Activated CD4-positive, alpha-beta memory T cell treated with anti-CD3 and anti-CD28 coated beads, Interleukin-2, amount 10 ng/mL, durations not matched to agents 7 days and 5 days (primary cell): ENCODE measurements at regions of chr11 and their contacts with region 1.

Region 1: DNA sequence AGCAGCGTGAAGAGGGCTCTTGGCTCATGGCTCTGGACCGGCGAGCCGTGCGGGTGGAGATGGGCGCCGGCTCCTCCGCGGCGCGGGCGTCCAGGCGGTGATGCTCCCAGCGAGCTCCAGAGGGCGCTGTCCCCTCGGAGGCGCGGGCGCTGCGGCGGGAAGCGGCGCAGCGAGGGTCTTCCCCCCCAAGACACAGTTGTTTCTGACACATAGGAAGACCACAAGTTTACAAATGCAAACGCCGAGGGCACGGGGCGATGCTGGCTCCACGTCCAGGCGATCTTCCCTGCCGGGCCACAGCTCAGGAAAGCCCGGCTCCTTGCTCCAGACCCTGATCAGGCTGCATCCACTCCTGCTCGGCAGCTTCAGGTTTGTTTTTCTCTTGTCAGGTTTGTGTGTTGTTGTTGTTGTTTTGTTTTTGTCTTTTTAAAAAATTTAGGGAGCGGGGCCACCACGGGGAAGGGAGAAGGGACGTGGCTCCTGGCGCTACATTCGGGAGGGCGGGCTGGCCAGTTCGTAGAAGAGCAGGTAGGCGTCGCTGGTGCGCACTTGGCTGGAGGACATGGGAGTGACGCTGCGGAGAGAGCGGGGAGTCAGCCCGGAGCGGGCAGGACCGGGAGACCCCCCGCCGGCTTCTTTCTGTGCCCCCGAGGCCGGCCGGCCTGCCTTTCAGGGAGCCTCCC is 10.0 kb upstream of the MFRP start:
- DNase-seq: peak; percentile 77
- H3K4me3 Mint-ChIP-seq: peak overlapping the region; percentile 87
- H3K27ac Mint-ChIP-seq: no peak overlapping the region
- H3K4me1 Mint-ChIP-seq: peaks cover 16% of the 10 kb centered on the region
- H3K27me3 Mint-ChIP-seq: peaks cover 35% of the 10 kb centered on the region

Region 2: GRCh38 chr11:119329320-119329719 is 27.2 kb before region 1 on chr11:
- CTCF ChIA-PET with region 1: interaction called, 15 read pairs
- POLR2A ChIA-PET with region 1: no interaction called
- DNase-seq: no peak
- H3K4me3 Mint-ChIP-seq: no peak overlapping the region
- H3K27ac Mint-ChIP-seq: no peak overlapping the region
- H3K4me1 Mint-ChIP-seq: peaks cover 16% of the 10 kb centered on the region
- H3K27me3 Mint-ChIP-seq: peaks cover 16% of the 10 kb centered on the region

Region 3: DNA sequence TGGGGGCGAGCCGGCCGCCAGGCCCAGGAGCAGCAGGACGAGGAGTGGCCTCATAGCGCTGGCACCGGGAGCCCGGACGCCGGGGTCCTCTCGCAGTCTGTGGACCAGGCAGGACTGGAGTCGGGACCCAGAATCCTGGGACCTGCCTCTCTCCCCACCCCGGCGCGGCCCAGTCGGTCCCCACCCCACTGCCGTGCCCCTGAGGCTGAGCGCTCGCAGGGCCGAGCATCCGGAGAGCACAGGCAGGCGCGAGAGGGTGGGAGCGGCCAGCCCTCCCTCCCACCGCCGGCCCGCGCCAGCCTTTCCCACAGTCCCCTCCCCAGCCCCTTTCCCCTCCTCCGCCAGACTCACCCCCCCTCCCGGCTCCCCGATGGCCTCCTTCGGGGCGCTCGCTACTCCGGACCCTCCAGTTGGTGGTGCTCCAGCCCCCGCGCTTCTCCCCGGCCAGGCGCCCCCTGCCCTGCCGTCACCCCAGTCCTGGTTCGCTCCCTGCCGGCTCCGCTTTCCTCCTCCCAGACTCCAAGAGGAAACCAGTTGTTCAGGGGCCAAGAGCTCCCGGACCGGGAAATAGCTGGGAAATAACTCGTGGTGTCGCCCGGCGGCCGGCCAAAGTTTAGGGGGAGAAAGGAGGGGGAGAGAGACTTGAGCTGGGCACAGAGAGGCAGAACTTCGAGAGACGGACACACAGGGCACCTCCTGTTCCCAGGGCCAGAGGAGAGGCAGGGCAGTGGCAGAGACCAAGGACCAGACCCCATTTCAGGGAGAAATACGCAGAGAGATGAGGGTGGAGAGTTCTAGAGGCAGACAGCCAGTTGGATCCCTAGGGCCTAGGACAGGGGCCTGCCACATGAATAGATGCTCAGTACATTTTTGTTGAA is 15.9 kb before region 1 on chr11 and contains the start of gene C1QTNF5:
- CTCF ChIA-PET with region 1: interaction called, 27 read pairs
- POLR2A ChIA-PET with region 1: no interaction called
- DNase-seq: no peak
- H3K4me3 Mint-ChIP-seq: no peak within 1 kb of the TSS
- H3K27ac Mint-ChIP-seq: no peak within 1 kb of the TSS
- H3K4me1 Mint-ChIP-seq: peaks cover 40% of the 10 kb centered on the region
- H3K27me3 Mint-ChIP-seq: peaks cover 37% of the 10 kb centered on the region
- total RNA-seq, gene C1QTNF5: not detected

Region 4: DNA sequence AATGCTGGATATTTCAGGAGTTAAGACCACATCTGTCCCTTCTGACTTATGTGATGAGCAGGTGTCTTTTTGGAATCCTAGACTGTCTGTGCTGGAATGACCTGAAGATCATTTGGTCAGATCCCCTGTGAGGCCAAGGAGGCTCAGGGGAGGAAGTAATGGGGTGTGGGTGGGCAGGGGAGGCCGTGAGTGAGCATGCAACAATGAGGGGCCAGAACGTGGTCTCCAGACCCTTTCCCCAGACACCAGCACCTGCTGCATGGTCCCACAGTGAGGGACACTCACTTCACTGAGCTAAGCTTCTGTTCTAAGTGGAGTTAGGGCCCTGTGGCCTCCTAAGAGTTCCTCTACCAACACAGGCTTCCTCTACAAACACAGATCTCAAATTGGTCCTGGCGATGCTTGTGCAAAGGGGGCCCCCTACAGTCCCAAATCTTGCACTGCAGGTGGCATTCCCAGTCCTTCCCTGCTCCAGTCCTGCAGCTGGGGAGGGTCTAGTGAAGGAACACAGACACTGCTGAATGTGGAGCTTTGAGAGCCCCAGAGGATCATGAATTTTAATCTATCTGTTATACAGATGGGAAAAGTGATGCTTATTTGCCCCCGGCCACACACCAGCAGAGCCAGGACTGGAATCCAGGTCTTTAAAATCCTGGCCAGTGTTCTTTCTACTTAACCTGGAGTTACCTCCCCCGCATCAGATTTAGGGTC is 17.6 kb after region 1 on chr11:
- CTCF ChIA-PET with region 1: interaction called, 115 read pairs
- POLR2A ChIA-PET with region 1: interaction called, 4 read pairs
- DNase-seq: peak; percentile 49
- H3K4me3 Mint-ChIP-seq: no peak overlapping the region
- H3K27ac Mint-ChIP-seq: no peak overlapping the region
- H3K4me1 Mint-ChIP-seq: peaks cover 18% of the 10 kb centered on the region
- H3K27me3 Mint-ChIP-seq: no peaks in the 10 kb centered on the region

Region 5: GRCh38 chr11:119381181-119381988 is 24.9 kb after region 1 on chr11 and contains the start of gene USP2:
- CTCF ChIA-PET with region 1: interaction called, 115 read pairs
- POLR2A ChIA-PET with region 1: interaction called, 4 read pairs
- DNase-seq: peak; percentile 96
- H3K4me3 Mint-ChIP-seq: no peak within 1 kb of the TSS
- H3K27ac Mint-ChIP-seq: no peak within 1 kb of the TSS
- H3K4me1 Mint-ChIP-seq: no peaks in the 10 kb centered on the region
- H3K27me3 Mint-ChIP-seq: peaks cover 5% of the 10 kb centered on the region
- total RNA-seq, gene USP2: 0.48 to 0.53 TPM

Region 6: DNA sequence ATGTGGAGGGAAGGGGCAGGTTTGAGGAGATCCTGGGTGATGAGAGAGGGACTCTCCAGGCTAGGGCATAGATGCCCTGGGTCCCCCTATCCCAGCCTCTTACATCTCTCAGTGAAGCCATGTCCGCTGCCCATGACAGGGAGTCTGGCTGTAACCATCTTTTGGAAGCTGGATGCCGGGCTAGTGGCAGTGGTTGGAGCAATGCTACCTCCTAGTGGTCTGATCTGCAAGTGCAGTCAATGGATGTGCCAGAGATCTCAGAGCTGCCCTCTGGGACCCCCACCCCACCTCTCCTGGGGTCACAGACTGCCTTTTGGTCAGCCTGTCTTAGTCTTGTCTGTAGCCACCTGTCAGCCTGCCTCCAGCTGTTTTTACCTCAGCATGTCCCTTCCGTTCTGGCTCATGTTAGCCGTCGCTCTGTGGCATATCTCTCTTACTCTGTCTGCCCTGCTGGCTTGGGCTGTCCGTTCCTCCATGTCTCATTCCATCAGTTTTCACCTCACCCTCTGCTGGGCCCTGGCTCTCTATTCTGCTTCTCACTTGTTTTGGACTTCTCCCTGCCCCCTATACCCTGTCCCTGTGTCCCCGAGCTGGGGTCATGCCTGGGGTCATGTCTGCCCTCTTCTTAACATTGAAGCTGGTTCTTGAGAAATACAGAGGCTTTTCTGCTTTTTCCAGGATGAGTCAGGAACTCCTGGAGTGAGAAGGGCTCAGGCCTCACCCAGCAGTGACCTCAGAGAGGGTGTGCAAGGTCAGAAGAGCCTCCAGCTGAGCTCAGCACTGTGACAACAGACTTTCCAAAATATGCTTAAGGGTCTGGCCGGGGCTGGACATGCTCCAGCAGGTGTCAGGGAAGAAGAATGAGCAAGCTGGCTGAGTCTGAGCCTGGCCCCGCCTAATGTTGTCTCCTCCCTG is 118.4 kb after region 1 on chr11:
- CTCF ChIA-PET with region 1: interaction called, 95 read pairs
- POLR2A ChIA-PET with region 1: no interaction called
- DNase-seq: peak; percentile 61
- H3K4me3 Mint-ChIP-seq: no peak overlapping the region
- H3K27ac Mint-ChIP-seq: no peak overlapping the region
- H3K4me1 Mint-ChIP-seq: no peaks in the 10 kb centered on the region
- H3K27me3 Mint-ChIP-seq: peaks cover 12% of the 10 kb centered on the region